RWPE1 (cell line): ENCODE measurements at regions of chr1 and their contacts with region 1.

Region 1: DNA sequence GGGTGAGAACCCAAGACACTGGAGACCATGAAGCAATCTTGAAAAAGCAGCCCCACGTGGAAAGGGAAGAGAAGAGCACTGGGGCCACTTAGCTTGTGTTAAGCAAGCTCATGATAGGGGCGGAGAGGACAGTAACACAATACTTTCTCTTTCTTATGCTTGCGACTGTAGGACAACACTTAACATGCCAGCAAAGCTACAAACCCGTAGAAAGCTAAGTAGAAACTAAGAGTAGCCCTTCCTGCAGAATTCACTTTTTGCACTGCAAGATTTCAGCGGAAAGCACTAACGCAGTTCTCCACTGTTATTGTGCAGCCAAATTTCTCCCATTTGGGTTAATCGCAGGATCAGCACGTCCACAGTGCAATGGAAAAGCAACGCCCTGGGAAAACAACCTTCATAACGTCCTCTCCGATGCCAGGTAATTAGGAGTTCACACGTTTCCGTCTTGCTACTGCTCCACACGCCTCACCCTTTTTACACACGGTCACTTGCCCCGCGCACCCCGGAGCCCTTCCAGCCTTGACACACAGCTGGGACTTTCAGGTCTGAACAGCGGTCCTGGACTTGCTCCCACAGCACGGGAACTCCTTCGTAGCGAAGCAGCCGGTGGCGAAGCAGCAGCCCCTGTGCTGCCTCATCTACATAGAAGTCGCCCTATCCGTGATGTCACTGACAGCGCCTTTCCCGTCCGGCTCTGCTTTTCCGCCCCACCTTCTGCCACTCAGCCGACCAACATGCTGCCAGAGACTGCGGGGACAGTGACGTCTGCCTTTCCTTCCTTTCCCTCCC is 148.6 kb downstream of the PPIAL4G start:
- DNase-seq: peak; percentile 80
- H3K27ac ChIP-seq: peak overlapping the region; percentile 83
- CTCF ChIP-seq: no peak

Region 2: DNA sequence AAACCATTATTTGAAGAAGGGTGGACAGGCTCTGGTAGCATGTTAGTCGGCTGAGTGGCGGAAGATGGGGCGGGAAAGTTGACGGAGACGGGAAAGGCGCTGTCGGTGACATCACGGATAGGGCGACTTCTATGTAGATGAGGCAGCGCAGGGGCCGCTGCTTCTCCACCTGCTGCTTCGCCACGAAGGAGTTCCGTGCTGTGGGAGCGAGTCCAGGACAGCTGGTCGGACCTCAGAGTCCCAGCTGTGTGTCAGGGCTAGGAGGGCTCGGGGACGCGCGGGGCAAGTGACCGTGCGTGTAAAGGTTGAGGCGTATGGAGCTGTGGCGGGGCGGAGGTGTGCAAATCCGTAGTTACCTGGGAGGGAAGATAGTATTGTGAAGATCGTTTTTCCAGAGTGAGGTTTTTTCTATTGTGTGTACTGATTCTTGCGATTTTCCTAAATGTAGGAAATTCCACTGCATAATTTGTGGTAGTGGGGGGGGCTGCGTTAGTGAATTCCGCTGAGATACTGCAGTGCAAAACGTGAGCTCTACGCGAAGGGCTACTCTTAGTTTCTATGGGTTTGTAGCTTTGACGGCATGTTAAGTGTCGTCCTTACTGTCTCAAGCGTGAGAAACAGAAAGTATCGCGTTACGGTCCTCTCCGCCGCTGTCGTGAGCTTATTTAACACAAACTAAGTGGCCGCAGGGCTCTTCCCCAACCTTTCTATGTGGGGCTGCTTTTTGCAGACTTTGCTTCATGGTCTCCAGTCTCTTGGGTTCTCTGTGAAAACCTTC is 71.2 kb before region 1 on chr1:
- CTCF ChIA-PET with region 1: no interaction called
- POLR2A ChIA-PET with region 1: interaction called, 16 read pairs
- DNase-seq: peak; percentile 84
- H3K27ac ChIP-seq: peak overlapping the region; percentile 76
- CTCF ChIP-seq: no peak

Region 3: DNA sequence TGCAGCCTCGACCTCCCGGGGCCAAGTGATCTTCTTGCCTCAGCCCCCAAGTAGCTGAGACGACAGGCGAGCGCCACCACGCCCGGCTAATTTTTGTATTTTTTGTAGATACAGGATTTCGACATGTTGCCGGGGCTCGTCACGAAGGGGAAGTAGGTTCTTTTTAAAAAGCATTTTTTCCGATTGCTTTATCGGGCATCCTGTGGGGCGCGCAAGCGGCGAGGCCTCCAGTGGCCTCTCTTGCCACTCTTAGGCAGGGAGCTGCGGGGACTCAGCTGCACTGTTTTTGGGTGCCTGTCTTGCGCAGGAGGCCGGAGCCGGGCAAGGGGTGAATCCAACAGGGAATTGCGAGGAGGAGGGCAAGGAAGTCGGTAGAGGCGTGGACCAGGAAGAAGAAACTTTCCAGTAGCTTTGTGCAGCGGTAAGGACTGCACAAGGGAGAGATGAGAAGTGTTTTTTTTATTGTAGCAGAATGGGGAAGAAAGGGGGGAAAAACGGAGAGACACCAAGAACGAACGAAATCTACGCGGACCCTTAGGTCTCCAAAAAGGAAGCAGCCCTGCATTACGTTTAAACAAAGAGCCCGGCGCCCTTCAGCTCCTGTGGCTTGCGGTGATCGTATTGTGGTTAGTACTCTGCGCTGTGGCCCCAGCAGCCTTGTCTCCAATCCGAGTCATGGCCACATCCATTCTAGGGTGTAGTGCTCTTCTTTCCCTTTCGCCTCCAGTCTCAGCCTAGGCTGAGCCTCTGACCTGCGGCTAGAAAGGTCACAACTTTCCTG is 16.2 kb before region 1 on chr1:
- CTCF ChIA-PET with region 1: no interaction called
- POLR2A ChIA-PET with region 1: no interaction called
- DNase-seq: no peak
- H3K27ac ChIP-seq: no peak overlapping the region
- CTCF ChIP-seq: no peak